ENCODE measurements at regions of chr20 and their contacts with region 1.

Region 1: GRCh38 chr20:17968366-17969279 is at the starts of genes MGME1 and SNX5:
- DNase-seq: peak; percentile 93

Region 2: DNA sequence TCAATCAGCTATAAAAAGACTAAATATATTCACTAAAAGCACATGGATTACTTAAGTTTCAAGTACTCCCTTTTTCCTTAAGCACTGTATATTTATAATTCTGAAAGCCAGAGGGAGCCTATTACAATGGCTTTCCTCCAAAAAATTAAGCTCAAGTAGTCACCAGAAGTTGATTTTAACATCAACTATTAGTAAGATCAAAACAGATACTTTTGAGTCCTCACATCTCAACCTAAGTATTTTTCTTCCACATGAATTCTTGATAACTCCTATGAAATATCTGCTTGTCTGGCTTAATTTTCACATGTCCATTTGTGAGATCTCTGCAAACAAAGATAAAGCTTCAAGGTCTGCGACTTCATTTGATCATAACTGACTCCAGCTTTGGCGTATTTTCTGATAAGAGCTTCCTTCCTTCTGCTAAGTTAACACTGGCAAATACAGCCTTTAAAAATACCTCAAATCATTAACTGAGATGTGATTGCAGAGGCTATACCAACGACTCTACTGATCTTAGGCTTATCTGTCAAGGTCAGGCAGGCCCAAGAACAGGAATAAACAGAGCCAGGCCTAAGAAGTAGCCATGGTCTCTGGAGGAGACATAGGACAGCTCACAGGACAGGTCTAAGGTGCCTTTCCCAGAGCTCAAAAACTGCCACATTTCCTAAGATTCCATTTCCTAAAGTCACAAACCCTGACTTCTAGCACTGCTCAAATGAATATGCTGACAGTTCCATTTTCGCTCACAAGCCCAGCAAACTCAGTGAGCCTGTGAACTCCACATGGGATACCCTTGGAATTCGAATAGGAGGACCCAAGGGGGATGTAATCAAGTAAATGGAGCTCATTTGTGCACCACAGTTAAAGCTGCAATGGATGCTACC is 10.0 kb before region 1 on chr20:
- CTCF ChIA-PET with region 1: interaction called, 3 read pairs
- POLR2A ChIA-PET with region 1: interaction called, 42 read pairs
- DNase-seq: no peak

Region 3: GRCh38 chr20:17985388-17986018 is 16.9 kb after region 1 on chr20:
- CTCF ChIA-PET with region 1: no interaction called
- POLR2A ChIA-PET with region 1: interaction called, 12 read pairs
- DNase-seq: no peak

Measured in HEK293T (cell line).